Sigmoid colon (tissue), 7 donors: ENCODE measurements at regions of chr5 and their contacts with region 1.

Region 1: GRCh38 chr5:159987031-159987674 is 21.8 kb upstream of the TTC1 start:
- DNase-seq: peak; percentile 84
- H3K4me3 ChIP-seq: peak overlapping the region; percentile 19 to 45 (median 37)
- H3K27ac ChIP-seq: no peak overlapping the region
- H3K4me1 ChIP-seq: peaks cover 0 to 9% (median 8%) of the 10 kb centered on the region in 4 donors
- H3K27me3 ChIP-seq: peaks cover 0 to 35% (median 12%) of the 10 kb centered on the region in 3 donors
- CTCF ChIP-seq: peak; percentile 23 to 51 (median 47)
- EP300 ChIP-seq: no peak
- POLR2A ChIP-seq: no peak

Region 2: GRCh38 chr5:159156426-159157238 is 830.5 kb before region 1 on chr5:
- intact Hi-C with region 1: loop called (anchors 10 kb)
- DNase-seq: no peak
- H3K4me3 ChIP-seq: no peak overlapping the region
- H3K27ac ChIP-seq: no peak overlapping the region
- H3K4me1 ChIP-seq: no peaks in the 10 kb centered on the region
- H3K27me3 ChIP-seq: no peaks in the 10 kb centered on the region
- CTCF ChIP-seq: peak; percentile 37 to 82 (median 70)
- EP300 ChIP-seq: no peak
- POLR2A ChIP-seq: no peak

Region 3: DNA sequence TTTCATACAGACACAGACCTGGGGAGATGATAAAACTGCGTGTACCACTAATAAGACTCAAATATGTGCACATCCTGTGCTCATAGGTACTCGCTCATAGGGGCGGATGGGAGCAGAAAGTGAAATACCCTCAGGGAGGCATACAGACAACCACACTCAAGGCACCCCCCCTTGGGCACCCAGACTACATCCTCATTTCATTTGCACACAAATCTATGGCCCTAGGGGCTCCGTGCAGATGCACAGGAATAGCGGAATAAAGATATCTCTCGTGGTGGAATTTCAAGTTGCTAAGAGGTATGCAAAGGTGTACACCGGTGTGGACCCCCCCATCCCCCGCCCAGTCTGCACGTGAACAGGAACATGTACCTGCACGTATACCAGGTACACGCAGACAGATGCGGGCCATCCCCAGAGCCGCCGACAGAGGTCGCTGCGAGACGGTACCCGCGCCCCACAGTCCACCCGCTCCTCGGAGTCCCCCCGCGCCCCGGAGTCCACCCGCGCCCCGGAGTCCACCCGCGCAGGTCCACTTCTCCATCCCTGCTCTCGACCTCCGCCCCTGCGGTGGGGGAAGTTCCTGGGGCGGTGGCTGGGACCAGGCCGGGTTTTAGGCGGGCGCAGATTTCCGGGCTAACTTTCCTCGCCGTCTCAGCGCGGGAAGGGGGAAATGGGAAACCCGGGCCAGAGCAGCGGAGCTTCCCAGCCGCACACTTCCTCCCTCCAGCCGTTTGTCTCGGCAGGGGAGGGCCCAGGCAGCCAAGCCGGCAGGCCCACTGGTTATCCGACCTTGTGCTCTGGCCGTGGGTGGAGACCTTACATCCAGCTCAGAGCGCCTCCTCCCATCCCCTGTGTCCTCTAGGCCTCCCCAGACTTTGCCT is 655.8 kb before region 1 on chr5:
- intact Hi-C with region 1: loop called (anchors 5 kb)
- DNase-seq: peak; percentile 74
- H3K4me3 ChIP-seq: peak overlapping the region; percentile 7 to 42 (median 30)
- H3K27ac ChIP-seq: no peak overlapping the region
- H3K4me1 ChIP-seq: peaks cover 0 to 13% (median 3%) of the 10 kb centered on the region in 4 donors
- H3K27me3 ChIP-seq: peaks cover 0 to 45% (median 16%) of the 10 kb centered on the region in 3 donors
- CTCF ChIP-seq: peak in 3 of 4 experiments; percentile 38 to 49 (median 46)
- EP300 ChIP-seq: no peak
- POLR2A ChIP-seq: no peak

Region 4: DNA sequence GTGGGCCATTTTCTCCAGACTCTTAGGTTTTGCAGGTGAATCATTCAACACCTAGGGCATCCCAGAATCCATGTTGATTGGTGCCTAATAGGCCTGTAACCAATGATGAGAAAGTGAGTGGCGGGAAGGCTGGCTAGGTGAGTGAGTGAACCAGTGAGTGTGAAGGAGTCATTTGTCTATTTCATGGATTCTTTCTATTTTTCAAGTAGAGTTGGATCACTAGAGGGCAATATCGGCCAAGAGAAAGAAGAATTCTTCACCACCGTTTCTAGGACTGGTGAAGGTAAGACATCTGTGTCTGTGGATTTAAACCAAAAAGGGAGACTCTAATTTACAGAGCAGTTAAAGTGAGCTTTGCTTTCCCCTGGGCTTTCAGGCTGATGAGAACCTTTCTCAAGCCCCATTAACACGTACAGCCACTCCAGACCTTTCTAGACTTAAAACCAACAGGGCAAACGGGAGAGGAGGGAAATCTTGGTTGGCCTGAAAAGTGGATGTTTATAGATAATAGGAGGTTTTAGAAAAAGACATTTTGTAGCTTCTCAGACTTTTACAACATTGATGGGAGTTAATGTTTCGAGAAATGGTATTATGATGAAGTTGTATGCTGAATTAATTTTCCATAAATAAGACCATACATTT is 542.6 kb before region 1 on chr5:
- intact Hi-C with region 1: loop called (anchors 2 kb)
- DNase-seq: no peak
- H3K4me3 ChIP-seq: no peak overlapping the region
- H3K27ac ChIP-seq: no peak overlapping the region
- H3K4me1 ChIP-seq: no peaks in the 10 kb centered on the region
- H3K27me3 ChIP-seq: no peaks in the 10 kb centered on the region
- CTCF ChIP-seq: peak in 2 of 4 experiments; percentile 19
- EP300 ChIP-seq: no peak
- POLR2A ChIP-seq: no peak

Region 5: DNA sequence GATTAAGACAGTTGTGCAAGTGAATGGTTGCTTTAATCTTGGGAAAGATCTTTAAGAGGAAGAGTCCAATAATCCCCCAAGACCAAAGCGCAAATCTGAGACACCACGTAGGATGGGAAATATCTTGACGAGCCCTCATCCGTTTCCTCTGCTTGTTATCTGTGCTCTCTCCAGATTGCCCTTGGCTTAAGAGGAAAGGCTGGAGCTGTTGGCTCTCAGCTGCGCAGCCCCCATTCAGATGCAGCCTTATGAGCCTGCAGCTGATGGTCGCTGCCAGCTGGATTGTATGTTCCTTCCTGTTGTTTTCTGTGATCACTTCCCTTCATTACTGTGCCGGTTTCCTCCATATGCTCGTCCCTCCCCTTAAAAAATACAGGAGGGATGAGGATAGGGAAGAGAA is 84.4 kb after region 1 on chr5:
- intact Hi-C with region 1: no loop called
- DNase-seq: no peak
- H3K4me3 ChIP-seq: no peak overlapping the region
- H3K27ac ChIP-seq: no peak overlapping the region
- H3K4me1 ChIP-seq: no peaks in the 10 kb centered on the region
- H3K27me3 ChIP-seq: no peaks in the 10 kb centered on the region
- CTCF ChIP-seq: no peak
- EP300 ChIP-seq: no peak
- POLR2A ChIP-seq: no peak